Activated CD4-positive, alpha-beta T cell treated with anti-CD3 and anti-CD28 coated beads, Interleukin-2, amount 10 ng/mL, durations not matched to agents 24 days and 14 days (primary cell): ENCODE measurements at regions of chr4 and their contacts with region 1.

Region 1: DNA sequence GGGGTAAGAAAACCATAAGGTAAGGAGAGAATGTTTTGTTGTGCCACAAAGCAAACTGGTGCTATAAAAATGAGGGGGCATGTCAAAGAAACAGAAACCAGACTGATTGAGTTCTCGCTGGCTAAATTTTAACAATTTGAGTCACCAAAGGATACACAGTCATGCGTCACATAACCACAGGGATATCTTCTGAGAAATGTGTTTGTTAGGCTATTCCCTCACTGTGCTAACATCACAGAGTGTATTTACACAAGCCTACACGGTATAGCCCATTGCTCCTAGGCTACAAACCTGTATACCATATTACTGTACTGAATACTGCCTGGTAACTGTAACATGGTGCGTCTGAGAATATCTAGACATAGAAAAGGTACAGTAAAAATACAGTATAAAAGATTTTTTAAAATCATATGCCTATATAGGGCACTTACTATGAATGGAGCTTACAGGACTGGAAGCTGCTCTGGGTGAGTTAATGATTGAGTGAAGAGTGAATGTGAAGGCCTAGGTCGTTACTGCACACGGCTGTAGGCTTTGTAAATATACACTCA is 50.1 kb downstream of the FBXW7 start:
- DNase-seq: peak; percentile 89
- H3K4me3 Mint-ChIP-seq: peak overlapping the region; percentile 43
- H3K27ac Mint-ChIP-seq: peak overlapping the region; percentile 56
- H3K4me1 Mint-ChIP-seq: peaks cover 38% of the 10 kb centered on the region
- H3K27me3 Mint-ChIP-seq: no peaks in the 10 kb centered on the region

Region 2: GRCh38 chr4:151031831-151032605 is 1453.8 kb before region 1 on chr4:
- intact Hi-C with region 1: loop called (anchors 5 kb)
- DNase-seq: no peak
- H3K4me3 Mint-ChIP-seq: peak overlapping the region; percentile 76
- H3K27ac Mint-ChIP-seq: peak overlapping the region; percentile 93
- H3K4me1 Mint-ChIP-seq: peaks cover 27% of the 10 kb centered on the region
- H3K27me3 Mint-ChIP-seq: no peaks in the 10 kb centered on the region

Region 3: GRCh38 chr4:151887031-151887815 is 598.6 kb before region 1 on chr4:
- intact Hi-C with region 1: loop called (anchors 2 kb)
- DNase-seq: no peak
- H3K4me3 Mint-ChIP-seq: no peak overlapping the region
- H3K27ac Mint-ChIP-seq: peak overlapping the region; percentile 57
- H3K4me1 Mint-ChIP-seq: peaks cover 28% of the 10 kb centered on the region
- H3K27me3 Mint-ChIP-seq: no peaks in the 10 kb centered on the region

Region 4: GRCh38 chr4:152255437-152256011 is 230.3 kb before region 1 on chr4:
- intact Hi-C with region 1: loop called (anchors 1 kb)
- DNase-seq: peak; percentile 90
- H3K4me3 Mint-ChIP-seq: no peak overlapping the region
- H3K27ac Mint-ChIP-seq: no peak overlapping the region
- H3K4me1 Mint-ChIP-seq: peaks cover 14% of the 10 kb centered on the region
- H3K27me3 Mint-ChIP-seq: no peaks in the 10 kb centered on the region

Region 5: DNA sequence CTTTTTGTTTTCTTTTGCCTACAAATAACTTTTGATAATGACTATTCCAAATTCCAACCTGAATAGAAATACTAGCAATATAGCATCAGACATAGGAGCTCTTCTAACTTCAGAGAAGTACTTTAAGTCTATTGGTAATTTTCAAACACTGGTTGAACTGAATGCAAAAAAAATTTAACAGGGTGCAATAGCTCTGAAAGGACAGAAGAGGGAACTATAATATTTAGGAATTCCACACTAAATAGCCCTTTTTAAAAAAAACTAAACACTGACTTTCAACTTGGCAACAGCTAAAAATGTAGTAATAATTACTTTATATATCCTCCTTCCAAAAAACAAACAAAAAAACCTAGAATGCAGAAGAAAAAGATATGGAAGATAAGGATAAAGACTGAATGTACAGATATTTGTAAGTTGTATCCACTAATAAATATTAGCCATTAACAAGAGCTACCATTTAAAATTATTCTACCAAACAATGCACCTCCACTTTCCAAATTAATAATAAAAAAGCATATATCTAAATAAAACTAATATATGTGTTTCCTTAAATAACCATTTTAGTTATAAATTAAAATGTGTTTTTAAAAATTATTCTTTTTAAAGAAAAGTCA is 31.3 kb before region 1 on chr4:
- intact Hi-C with region 1: loop called (anchors 1 kb)
- DNase-seq: no peak
- H3K4me3 Mint-ChIP-seq: no peak overlapping the region
- H3K27ac Mint-ChIP-seq: no peak overlapping the region
- H3K4me1 Mint-ChIP-seq: peaks cover 29% of the 10 kb centered on the region
- H3K27me3 Mint-ChIP-seq: no peaks in the 10 kb centered on the region

Region 6: GRCh38 chr4:152559641-152560040 is 73.8 kb after region 1 on chr4:
- intact Hi-C with region 1: loop called (anchors 1 kb)
- DNase-seq: no peak
- H3K4me3 Mint-ChIP-seq: no peak overlapping the region
- H3K27ac Mint-ChIP-seq: no peak overlapping the region
- H3K4me1 Mint-ChIP-seq: peaks cover 19% of the 10 kb centered on the region
- H3K27me3 Mint-ChIP-seq: no peaks in the 10 kb centered on the region

Region 7: GRCh38 chr4:152779513-152780266 is 293.9 kb after region 1 on chr4 and contains the starts of genes ARFIP1 and TIGD4:
- intact Hi-C with region 1: loop called (anchors 10 kb)
- DNase-seq: peak; percentile 99
- H3K4me3 Mint-ChIP-seq: peak within 1 kb of the TSS; percentile 100
- H3K27ac Mint-ChIP-seq: peak within 1 kb of the TSS; percentile 97
- H3K4me1 Mint-ChIP-seq: peaks cover 44% of the 10 kb centered on the region
- H3K27me3 Mint-ChIP-seq: peaks cover 30% of the 10 kb centered on the region
- total RNA-seq, gene ARFIP1: 13.0 and 14.6 TPM in 2 replicates
- total RNA-seq, gene TIGD4: 0.28 and 0.31 TPM in 2 replicates